B cell (primary cell): ENCODE measurements at regions of chr3 and their contacts with region 1.

Region 1: DNA sequence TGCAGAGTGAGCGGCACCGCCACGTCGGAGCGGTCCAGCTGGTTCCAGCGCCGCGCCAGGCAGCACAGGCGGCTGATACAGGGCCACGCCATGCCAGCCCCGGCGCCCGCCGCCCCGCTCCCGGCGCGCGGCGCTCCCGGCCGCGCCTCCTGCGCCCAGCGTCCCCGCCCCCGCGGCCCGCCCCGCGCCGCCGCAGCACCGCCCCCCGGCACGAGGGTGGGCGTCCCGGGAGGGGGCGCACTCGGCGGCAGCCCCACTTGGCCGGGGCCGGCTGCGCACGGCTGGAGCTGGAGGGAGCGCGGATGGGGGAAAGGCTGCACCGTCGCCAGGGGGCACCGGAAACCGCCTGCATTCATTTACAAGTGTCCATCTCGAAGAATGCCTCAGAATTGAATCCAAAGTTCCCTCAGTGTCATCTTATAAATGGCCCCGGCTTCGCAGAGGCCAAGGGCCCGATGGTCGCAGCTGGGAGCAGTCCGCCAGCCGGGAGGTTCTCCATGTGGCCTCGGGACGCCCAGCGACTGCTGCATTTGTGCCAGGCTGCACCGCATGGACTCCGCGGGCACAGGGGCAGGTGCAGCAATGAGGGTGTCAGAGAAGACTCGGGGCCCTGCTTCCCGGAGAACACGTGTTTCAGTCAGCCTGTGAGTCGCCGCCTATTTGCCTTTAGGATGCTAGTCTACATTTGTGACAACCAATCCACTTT is at the start of gene MAP6D1:
- DNase-seq: peak; percentile 54
- ATAC-seq: peak; percentile 82
- H3K4me3 ChIP-seq: peak within 1 kb of the TSS; percentile 11 to 56 (median 51)
- H3K4me3 Mint-ChIP-seq: peak within 1 kb of the TSS; percentile 86
- H3K27ac ChIP-seq: no peak within 1 kb of the TSS
- H3K27ac Mint-ChIP-seq: peak within 1 kb of the TSS; percentile 50
- H3K4me1 ChIP-seq: peaks cover 11 to 14% of the 10 kb centered on the region in 2 donors
- H3K4me1 Mint-ChIP-seq: peaks cover 16% of the 10 kb centered on the region
- H3K27me3 ChIP-seq: peaks cover 0 to 12% (median 2%) of the 10 kb centered on the region in 4 experiments
- H3K27me3 Mint-ChIP-seq: peaks cover 4% of the 10 kb centered on the region
- CTCF ChIP-seq: no peak
- total RNA-seq, gene MAP6D1: 1.8 and 4.2 TPM in 2 replicates

Region 2: DNA sequence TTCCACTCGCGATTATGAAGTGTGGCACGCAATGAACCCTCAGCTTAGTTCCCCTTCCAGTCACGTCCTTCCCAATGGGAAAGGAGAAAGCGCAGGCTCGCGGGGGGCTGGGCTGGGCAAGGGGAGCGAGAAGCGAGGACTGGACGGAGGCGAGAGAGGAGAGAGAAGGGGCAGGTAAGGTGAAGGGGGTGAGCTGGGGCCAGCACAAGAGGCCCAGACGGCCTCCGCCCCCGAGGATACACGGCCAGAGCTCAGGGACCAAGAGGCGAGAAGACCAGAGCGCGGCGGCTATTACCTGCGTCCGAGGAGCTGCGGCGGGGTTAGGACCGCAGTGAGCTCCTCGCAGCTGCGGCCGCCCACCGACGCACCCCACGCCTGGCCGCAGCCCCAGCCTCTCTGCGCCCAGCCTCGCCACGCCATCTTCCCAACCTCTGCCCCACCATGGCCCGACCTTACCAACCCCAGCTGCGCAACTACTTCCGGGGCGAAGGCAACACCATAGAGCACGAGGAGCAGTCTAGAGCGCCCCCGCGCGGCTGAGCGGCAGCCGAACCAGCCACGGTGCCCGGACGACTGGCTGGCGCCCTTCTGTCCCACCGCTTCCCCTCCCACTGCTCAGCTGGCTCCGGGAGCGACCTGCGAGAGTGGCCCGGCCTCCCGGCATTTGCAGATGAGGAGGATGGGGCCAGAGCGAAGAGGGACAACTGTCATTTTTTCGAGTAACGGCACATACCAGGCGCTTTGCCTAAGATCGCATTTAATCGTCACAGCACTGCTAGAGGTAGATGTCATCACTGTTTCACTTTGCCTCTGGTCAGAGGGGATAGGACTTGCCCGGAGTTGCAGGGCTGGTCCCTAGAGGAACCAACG is 59.1 kb after region 1 on chr3 and contains the start of gene PARL:
- CTCF ChIA-PET with region 1: interaction called, 12 read pairs
- POLR2A ChIA-PET with region 1: no interaction called
- intact Hi-C with region 1: loop called (anchors 1 kb)
- DNase-seq: peak; percentile 95
- ATAC-seq: peak; percentile 100
- H3K4me3 ChIP-seq: peak within 1 kb of the TSS; percentile 68 to 96 (median 84)
- H3K4me3 Mint-ChIP-seq: peak within 1 kb of the TSS; percentile 92
- H3K27ac ChIP-seq: peak within 1 kb of the TSS; percentile 39 to 75
- H3K27ac Mint-ChIP-seq: peak within 1 kb of the TSS; percentile 94
- H3K4me1 ChIP-seq: peaks cover 11 to 19% of the 10 kb centered on the region in 2 donors
- H3K4me1 Mint-ChIP-seq: peaks cover 36% of the 10 kb centered on the region
- H3K27me3 ChIP-seq: peaks cover 0 to 6% (median 0%) of the 10 kb centered on the region in 4 experiments
- H3K27me3 Mint-ChIP-seq: peaks cover 3% of the 10 kb centered on the region
- CTCF ChIP-seq: peak; percentile 90
- total RNA-seq, gene PARL: 46.7 and 51.2 TPM in 2 replicates